Aorta (tissue), 5 donors: ENCODE measurements at regions of chr16 and their contacts with region 1.

Region 1: GRCh38 chr16:74064120-74064735 is 232.4 kb upstream of the PSMD7 start:
- DNase-seq: no peak
- ATAC-seq: no peak
- H3K4me3 ChIP-seq: no peak overlapping the region
- H3K27ac ChIP-seq: no peak overlapping the region
- H3K4me1 ChIP-seq: no peaks in the 10 kb centered on the region
- H3K27me3 ChIP-seq: no peaks in the 10 kb centered on the region

Region 2: DNA sequence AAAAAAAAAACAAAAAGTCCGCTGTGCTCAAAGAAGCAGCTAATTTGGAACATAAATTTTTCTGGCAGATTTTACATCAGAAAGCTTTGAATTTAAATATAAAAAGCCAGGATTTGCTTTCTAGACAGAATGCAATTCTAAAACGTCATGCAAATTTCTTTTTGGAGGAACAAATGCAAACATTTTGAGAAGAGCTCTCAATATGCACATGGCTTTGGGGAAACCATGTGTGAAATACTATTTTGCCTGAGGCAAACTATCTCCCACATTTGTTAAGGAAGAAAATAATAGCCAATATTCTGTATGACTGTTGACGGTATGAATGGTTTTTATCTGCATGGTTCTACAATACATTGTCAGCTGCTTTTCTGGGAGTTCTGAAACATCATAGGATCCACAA is 87.6 kb before region 1 on chr16:
- intact Hi-C with region 1: no loop called
- DNase-seq: no peak
- ATAC-seq: no peak
- H3K4me3 ChIP-seq: no peak overlapping the region
- H3K27ac ChIP-seq: no peak overlapping the region
- H3K4me1 ChIP-seq: no peaks in the 10 kb centered on the region
- H3K27me3 ChIP-seq: no peaks in the 10 kb centered on the region

Region 3: GRCh38 chr16:73996624-73997339 is 67.4 kb before region 1 on chr16:
- intact Hi-C with region 1: no loop called
- DNase-seq: no peak
- ATAC-seq: no peak
- H3K4me3 ChIP-seq: no peak overlapping the region
- H3K27ac ChIP-seq: no peak overlapping the region
- H3K4me1 ChIP-seq: no peaks in the 10 kb centered on the region
- H3K27me3 ChIP-seq: no peaks in the 10 kb centered on the region

Region 4: GRCh38 chr16:74146643-74147042 is 82.4 kb after region 1 on chr16:
- intact Hi-C with region 1: no loop called
- DNase-seq: no peak
- ATAC-seq: no peak
- H3K4me3 ChIP-seq: no peak overlapping the region
- H3K27ac ChIP-seq: no peak overlapping the region
- H3K4me1 ChIP-seq: no peaks in the 10 kb centered on the region
- H3K27me3 ChIP-seq: no peaks in the 10 kb centered on the region

Region 5: GRCh38 chr16:74226338-74226954 is 162.2 kb after region 1 on chr16:
- intact Hi-C with region 1: loop called (anchors 2 to 5 kb)
- DNase-seq: no peak
- ATAC-seq: no peak
- H3K4me3 ChIP-seq: no peak overlapping the region
- H3K27ac ChIP-seq: no peak overlapping the region
- H3K4me1 ChIP-seq: no peaks in the 10 kb centered on the region
- H3K27me3 ChIP-seq: peaks cover 0 to 1% of the 10 kb centered on the region in 2 donors

Region 6: GRCh38 chr16:74275002-74275636 is 210.9 kb after region 1 on chr16:
- intact Hi-C with region 1: loop called in 1 of 2 experiments (anchors 10 kb)
- DNase-seq: no peak
- ATAC-seq: no peak
- H3K4me3 ChIP-seq: no peak overlapping the region
- H3K27ac ChIP-seq: no peak overlapping the region
- H3K4me1 ChIP-seq: no peaks in the 10 kb centered on the region
- H3K27me3 ChIP-seq: no peaks in the 10 kb centered on the region